ENCODE measurements at regions of chr14 and their contacts with region 1.

Region 1: GRCh38 chr14:32710731-32711680 is 227.7 kb upstream of the NPAS3 start:
- DNase-seq: no peak
- H3K4me3 ChIP-seq: peak overlapping the region; percentile 36 to 43 (median 38)
- H3K27ac ChIP-seq: peak overlapping the region; percentile 72 to 80 (median 74)
- H3K4me1 ChIP-seq: peaks cover 15 to 51% (median 43%) of the 10 kb centered on the region in 4 donors
- H3K27me3 ChIP-seq: no peaks in the 10 kb centered on the region
- CTCF ChIP-seq: peak; percentile 39 to 55 (median 43)
- EP300 ChIP-seq: no peak
- POLR2A ChIP-seq: no peak

Region 2: DNA sequence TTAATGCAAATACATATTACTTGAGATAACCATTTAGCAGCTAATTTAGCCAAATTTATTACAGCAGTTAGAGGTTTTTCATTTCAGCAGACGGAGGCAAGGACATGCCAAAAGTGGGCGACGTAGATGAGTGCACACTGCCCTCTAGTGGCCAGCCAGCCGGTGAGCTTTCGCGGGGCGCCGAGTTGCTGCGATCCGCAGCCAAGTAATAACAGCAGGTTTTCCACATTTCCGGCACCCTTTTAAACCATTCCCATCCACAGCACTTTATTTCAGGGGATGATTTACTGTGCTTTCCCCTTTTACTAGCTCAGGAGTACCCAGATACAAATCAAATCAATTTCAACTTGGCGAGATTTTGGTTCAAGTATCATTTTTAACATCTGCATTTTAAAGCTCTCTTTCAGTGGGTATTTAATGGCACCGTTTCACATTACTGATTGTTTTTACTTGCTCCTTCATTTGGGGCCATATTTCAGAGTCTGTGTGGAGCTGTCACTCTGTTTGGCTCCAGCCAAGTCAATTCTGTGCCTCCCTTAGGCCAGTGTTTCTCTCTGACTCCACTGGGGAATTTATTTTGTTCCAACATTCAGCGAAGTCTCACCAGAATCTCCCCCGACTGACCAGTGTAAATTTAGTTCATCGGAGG is 1081.8 kb after region 1 on chr14:
- intact Hi-C with region 1: loop called (anchors 10 kb)
- DNase-seq: peak; percentile 94
- H3K4me3 ChIP-seq: peak overlapping the region; percentile 32 to 41 (median 37)
- H3K27ac ChIP-seq: peak overlapping the region in 3 of 4 donors; percentile 33 to 54 (median 44)
- H3K4me1 ChIP-seq: peaks cover 0 to 28% (median 16%) of the 10 kb centered on the region in 4 donors
- H3K27me3 ChIP-seq: no peaks in the 10 kb centered on the region
- CTCF ChIP-seq: peak; percentile 89 to 96 (median 94)
- EP300 ChIP-seq: no peak
- POLR2A ChIP-seq: no peak

Measured in esophagus muscularis mucosa (tissue), 4 donors.